CD14-positive monocyte (primary cell): ENCODE measurements at regions of chr22 and their contacts with region 1.

Region 1: GRCh38 chr22:32474635-32475467 is at the start of gene FBXO7:
- DNase-seq: peak; percentile 79 to 80 (median 79)
- H3K4me3 ChIP-seq: peak within 1 kb of the TSS; percentile 56 to 94 (median 81)
- H3K4me3 Mint-ChIP-seq: peak within 1 kb of the TSS; percentile 93 to 97
- H3K27ac ChIP-seq: peak within 1 kb of the TSS; percentile 79 to 95
- H3K27ac Mint-ChIP-seq: peak within 1 kb of the TSS; percentile 87 to 96 (median 92)
- H3K4me1 ChIP-seq: peaks cover 21 to 41% of the 10 kb centered on the region in 2 donors
- H3K4me1 Mint-ChIP-seq: peaks cover 30% of the 10 kb centered on the region
- H3K27me3 ChIP-seq: no peaks in the 10 kb centered on the region
- H3K27me3 Mint-ChIP-seq: no peaks in the 10 kb centered on the region
- CTCF ChIP-seq: no peak
- polyA plus RNA-seq, gene FBXO7: 56.7 to 116 (median 103) TPM

Region 2: DNA sequence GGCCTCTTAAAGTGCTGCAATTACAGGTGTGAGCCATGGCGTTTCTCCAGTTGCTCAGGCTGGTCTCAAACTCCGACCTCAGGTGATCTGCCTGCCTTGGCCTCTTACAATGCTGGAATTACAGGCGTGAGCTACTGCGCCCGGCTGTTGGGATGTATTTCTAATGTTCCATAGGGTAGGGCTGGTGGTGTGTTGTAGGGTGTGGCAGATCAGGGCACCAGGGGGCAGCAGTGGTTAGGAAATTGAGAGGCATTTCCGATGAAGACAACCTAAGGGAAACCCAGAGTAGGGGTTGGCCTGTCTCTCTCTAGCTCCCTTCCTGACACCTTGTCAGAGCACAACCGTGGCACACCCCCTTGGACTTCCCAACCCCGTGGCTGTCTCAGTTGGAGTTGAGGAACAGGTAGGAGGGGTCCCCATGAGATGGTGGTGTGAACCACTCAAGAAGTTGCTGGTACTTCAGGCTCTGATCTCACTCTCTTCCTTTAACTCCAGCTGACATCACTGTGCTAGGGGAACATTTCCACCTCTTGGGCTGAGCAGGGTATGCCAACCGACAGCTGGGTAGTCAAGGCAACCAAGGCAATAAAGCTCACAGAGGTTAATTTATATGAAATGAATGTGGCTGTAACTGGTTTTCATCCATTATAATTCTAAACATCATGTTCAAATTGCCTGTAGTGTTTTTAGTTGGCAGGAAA is 497.6 kb before region 1 on chr22:
- intact Hi-C with region 1: loop called (anchors 5 kb)
- DNase-seq: peak; percentile 42 to 54 (median 44)
- H3K4me3 ChIP-seq: no peak overlapping the region
- H3K4me3 Mint-ChIP-seq: no peak overlapping the region
- H3K27ac ChIP-seq: no peak overlapping the region
- H3K27ac Mint-ChIP-seq: peak overlapping the region in 1 of 7 donors; percentile 56
- H3K4me1 ChIP-seq: no peaks in the 10 kb centered on the region
- H3K4me1 Mint-ChIP-seq: no peaks in the 10 kb centered on the region
- H3K27me3 ChIP-seq: no peaks in the 10 kb centered on the region
- H3K27me3 Mint-ChIP-seq: peaks cover 0 to 10% (median 3%) of the 10 kb centered on the region in 3 donors
- CTCF ChIP-seq: peak; percentile 75

Region 3: GRCh38 chr22:32411829-32412592 is 62.8 kb before region 1 on chr22 and contains the start of gene RTCB:
- intact Hi-C with region 1: loop called (anchors 2 to 10 kb)
- DNase-seq: peak; percentile 86 to 90 (median 87)
- H3K4me3 ChIP-seq: peak within 1 kb of the TSS; percentile 82 to 98 (median 93)
- H3K4me3 Mint-ChIP-seq: peak within 1 kb of the TSS; percentile 96 to 97
- H3K27ac ChIP-seq: peak within 1 kb of the TSS; percentile 63 to 93
- H3K27ac Mint-ChIP-seq: peak within 1 kb of the TSS; percentile 86 to 93 (median 89)
- H3K4me1 ChIP-seq: peaks cover 30 to 42% of the 10 kb centered on the region in 2 donors
- H3K4me1 Mint-ChIP-seq: peaks cover 37% of the 10 kb centered on the region
- H3K27me3 ChIP-seq: no peaks in the 10 kb centered on the region
- H3K27me3 Mint-ChIP-seq: peaks cover 0 to 6% (median 0%) of the 10 kb centered on the region in 3 donors
- CTCF ChIP-seq: no peak
- polyA plus RNA-seq, gene RTCB: 41.5 to 106 (median 104) TPM